ENCODE measurements at regions of chr11 and their contacts with region 1.

Region 1: GRCh38 chr11:106724293-106724892 is 293.9 kb downstream of the GUCY1A2 start:
- DNase-seq: no peak

Region 2: GRCh38 chr11:106381901-106382300 is 342.5 kb before region 1 on chr11:
- intact Hi-C with region 1: no loop called
- DNase-seq: no peak

Region 3: GRCh38 chr11:107017433-107018227 is 293.2 kb after region 1 on chr11:
- intact Hi-C with region 1: loop called (anchors 10 kb)
- DNase-seq: peak; percentile 86

Region 4: GRCh38 chr11:108008656-108009496 is 1284.5 kb after region 1 on chr11 and contains the start of gene CUL5:
- intact Hi-C with region 1: no loop called
- DNase-seq: peak; percentile 98
- total RNA-seq, gene CUL5: 35.2 to 40.4 TPM